ENCODE measurements at regions of chr17 and their contacts with region 1.

Region 1: GRCh38 chr17:45385331-45385997 is 47.2 kb downstream of the ARHGAP27 start:
- DNase-seq: peak; percentile 84 to 91
- H3K4me3 ChIP-seq: no peak overlapping the region
- H3K27ac ChIP-seq: no peak overlapping the region
- H3K4me1 ChIP-seq: peaks cover 0 to 15% of the 10 kb centered on the region in 2 donors
- H3K27me3 ChIP-seq: no peaks in the 10 kb centered on the region
- CTCF ChIP-seq: peak; percentile 92 to 97 (median 96)
- POLR2A ChIP-seq: no peak

Region 2: GRCh38 chr17:45148183-45149036 is 237.1 kb before region 1 on chr17 and contains the start of gene HEXIM1:
- intact Hi-C with region 1: loop called (anchors 10 kb)
- DNase-seq: peak; percentile 99
- H3K4me3 ChIP-seq: peak within 1 kb of the TSS; percentile 57 to 71 (median 58)
- H3K27ac ChIP-seq: peak within 1 kb of the TSS; percentile 93 to 99 (median 98)
- H3K4me1 ChIP-seq: peaks cover 17 to 41% of the 10 kb centered on the region in 2 donors
- H3K27me3 ChIP-seq: no peaks in the 10 kb centered on the region
- CTCF ChIP-seq: no peak
- POLR2A ChIP-seq: peak; percentile 96 to 100
- total RNA-seq, gene HEXIM1: 15.6 to 33.5 (median 18.4) TPM

Region 3: GRCh38 chr17:45277216-45277849 is 108.1 kb before region 1 on chr17:
- intact Hi-C with region 1: loop called (anchors 2 kb)
- DNase-seq: peak; percentile 97 to 98
- H3K4me3 ChIP-seq: no peak overlapping the region
- H3K27ac ChIP-seq: peak overlapping the region; percentile 2 to 69 (median 38)
- H3K4me1 ChIP-seq: peaks cover 14 to 16% of the 10 kb centered on the region in 2 donors
- H3K27me3 ChIP-seq: no peaks in the 10 kb centered on the region
- CTCF ChIP-seq: peak; percentile 27 to 94 (median 84)
- POLR2A ChIP-seq: no peak

Region 4: GRCh38 chr17:45573924-45574770 is 188.7 kb after region 1 on chr17:
- intact Hi-C with region 1: no loop called
- DNase-seq: no peak
- H3K4me3 ChIP-seq: no peak overlapping the region
- H3K27ac ChIP-seq: no peak overlapping the region
- H3K4me1 ChIP-seq: no peaks in the 10 kb centered on the region
- H3K27me3 ChIP-seq: no peaks in the 10 kb centered on the region
- CTCF ChIP-seq: no peak
- POLR2A ChIP-seq: no peak